ENCODE measurements at regions of chr10 and their contacts with region 1.

Region 1: DNA sequence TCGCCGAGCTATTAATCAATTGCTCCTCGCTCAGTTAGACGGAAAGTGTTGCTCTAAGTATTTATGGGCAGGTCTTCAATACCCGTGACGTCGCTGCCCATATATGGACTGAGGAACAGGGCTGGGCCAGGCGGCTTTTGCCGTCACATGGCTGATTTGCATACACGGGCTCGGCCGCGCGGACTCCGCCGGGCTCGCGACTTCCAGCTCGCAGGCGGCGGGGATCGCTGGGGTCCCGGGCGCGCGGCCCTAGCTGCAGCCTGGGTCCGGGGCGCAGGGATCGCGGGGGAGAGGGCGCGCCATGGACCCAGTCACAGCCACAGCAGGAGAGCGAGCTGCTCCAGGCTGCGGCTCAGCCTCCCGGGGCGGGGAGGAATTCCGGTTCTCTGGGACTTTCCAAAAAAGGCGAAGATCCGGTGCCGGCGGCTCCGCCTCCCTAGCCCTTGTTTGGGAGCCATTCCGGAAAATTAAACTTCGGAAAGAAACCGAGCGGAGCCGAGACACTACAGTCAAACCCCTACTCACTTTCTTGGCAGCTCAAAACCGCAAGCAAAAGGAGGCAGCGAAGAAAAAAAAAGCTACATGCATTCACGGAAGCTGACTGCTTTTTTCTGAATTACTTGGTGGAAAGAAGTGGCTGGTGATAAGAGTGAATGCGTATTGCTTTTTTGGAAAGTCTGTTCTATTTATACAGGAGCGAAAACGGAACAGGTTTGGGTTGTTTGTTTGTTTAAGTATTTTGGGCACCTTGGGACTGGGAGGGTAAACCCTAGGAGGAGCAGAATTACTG is at the start of gene EGR2:
- DNase-seq: peak; percentile 94 to 95
- ATAC-seq: peak; percentile 88
- total RNA-seq, gene EGR2: 1.1 to 1.2 TPM

Region 2: GRCh38 chr10:63157845-63158624 is 341.5 kb after region 1 on chr10:
- intact Hi-C with region 1: loop called in 1 of 2 experiments (anchors 10 kb)
- DNase-seq: no peak
- ATAC-seq: peak; percentile 49